ENCODE measurements at regions of chrX and their contacts with region 1.

Region 1: GRCh38 chrX:32893751-32894150 is 317.6 kb downstream of the DMD start:
- DNase-seq: peak in 1 of 2 donors; percentile 50
- ATAC-seq: peak; percentile 41 to 60
- H3K4me3 ChIP-seq: no peak overlapping the region
- H3K27ac ChIP-seq: peak overlapping the region; percentile 67 to 75 (median 74)
- H3K4me1 ChIP-seq: peaks cover 5 to 11% of the 10 kb centered on the region in 2 donors
- H3K27me3 ChIP-seq: peaks cover 0 to 3% (median 0%) of the 10 kb centered on the region in 3 donors
- CTCF ChIP-seq: no peak
- POLR2A ChIP-seq: no peak

Region 2: GRCh38 chrX:32825009-32825408 is 68.7 kb before region 1 on chrX:
- in situ Hi-C with region 1: no loop called
- intact Hi-C with region 1: no loop called
- DNase-seq: no peak
- ATAC-seq: peak; percentile 58 to 75
- H3K4me3 ChIP-seq: no peak overlapping the region
- H3K27ac ChIP-seq: peak overlapping the region; percentile 35 to 61 (median 51)
- H3K4me1 ChIP-seq: no peaks in the 10 kb centered on the region
- H3K27me3 ChIP-seq: no peaks in the 10 kb centered on the region
- CTCF ChIP-seq: no peak
- POLR2A ChIP-seq: no peak

Region 3: DNA sequence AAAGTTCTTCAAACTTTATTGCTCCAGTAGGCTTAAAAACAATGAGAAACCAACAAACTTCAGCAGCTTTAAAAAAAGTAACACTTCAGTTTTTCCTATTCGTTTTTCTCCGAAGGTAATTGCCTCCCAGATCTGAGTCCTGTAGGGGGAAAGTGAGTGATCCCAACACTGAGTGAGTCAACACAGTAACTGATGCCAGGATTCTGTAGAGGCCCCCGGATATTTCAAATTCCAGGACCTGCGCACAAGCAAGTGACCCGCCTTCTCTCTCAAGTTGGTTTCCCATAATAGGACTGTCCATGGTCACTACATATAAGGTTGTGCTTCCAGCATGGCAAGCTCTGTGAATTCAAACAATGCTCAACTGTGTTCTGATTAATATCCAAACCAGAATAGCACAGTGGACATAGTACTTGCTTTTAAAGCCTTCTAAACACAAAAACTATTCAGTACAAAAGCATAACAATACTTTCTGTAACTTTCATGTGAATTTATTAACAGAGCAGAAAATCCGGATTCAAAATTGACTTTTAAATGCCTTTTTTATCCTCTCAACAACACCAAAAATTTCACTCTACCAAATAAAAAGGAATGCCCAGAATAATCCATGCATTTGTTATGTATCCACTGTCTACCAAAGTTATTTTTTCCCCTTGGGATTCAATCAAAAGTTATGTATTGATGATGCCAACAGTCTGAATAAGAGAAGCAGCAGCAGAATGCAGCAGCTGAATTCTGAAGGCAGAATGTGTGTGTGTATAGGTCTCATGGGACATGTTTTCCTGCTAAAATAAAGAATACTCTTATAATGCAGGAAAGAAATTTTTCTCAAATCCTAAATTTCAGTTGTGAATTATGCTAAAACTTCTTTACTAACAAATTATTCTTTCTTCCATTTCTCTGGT is 317.9 kb after region 1 on chrX and contains the start of gene DMD:
- in situ Hi-C with region 1: no loop called
- intact Hi-C with region 1: loop called (anchors 10 kb)
- DNase-seq: peak; percentile 49 to 76
- ATAC-seq: peak; percentile 90 to 92
- H3K4me3 ChIP-seq: peak within 1 kb of the TSS; percentile 51 to 61 (median 55)
- H3K27ac ChIP-seq: peak within 1 kb of the TSS; percentile 78 to 91 (median 84)
- H3K4me1 ChIP-seq: peaks cover 4 to 5% of the 10 kb centered on the region in 2 donors
- H3K27me3 ChIP-seq: no peaks in the 10 kb centered on the region
- CTCF ChIP-seq: peak in 1 of 5 experiments; percentile 29
- POLR2A ChIP-seq: peak; percentile 14 to 59
- total RNA-seq, gene DMD: 53.5 to 201 (median 98.9) TPM